ENCODE measurements at regions of chr3 and their contacts with region 1.

Region 1: DNA sequence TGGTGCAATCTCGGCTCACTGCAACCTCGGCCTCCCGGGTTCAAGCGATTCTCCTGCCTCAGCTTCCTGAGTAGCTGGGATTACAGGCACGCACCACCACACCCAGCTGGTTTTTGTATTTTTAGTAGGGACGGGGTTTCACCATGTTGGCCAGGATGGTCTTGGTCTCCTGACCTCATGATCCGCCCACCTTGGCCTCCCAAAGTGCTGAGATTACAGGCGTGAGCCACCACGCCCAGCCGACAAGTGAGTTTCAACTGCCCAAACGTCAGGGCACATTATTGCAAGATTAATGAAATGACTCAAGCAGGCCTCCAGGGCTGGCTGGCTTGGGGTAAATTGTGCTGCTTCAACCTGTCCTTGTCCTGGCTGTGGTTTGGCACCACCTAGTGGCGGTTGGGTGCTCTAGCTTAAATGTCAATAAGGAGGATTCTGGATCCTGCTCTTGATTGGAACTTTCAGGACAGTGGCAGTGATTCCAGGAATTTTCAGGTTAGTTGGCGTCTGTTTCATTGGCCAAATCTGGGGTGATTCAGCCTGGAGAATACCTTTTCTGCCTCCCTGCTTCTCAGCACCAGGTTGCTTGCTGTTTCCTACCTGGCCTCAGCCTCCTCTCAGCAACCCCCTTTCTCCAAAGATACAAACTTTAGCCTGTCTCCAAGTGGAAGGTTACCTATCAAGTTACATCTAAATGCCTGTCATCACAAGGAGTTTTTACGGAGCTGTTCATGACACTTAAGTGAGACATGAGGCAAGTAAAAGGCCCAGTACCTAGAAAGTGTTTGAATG is 32.4 kb upstream of the SACM1L start:
- DNase-seq: peak; percentile 67 to 92 (median 81)
- ATAC-seq: peak; percentile 83 to 94 (median 87)
- H3K4me3 ChIP-seq: no peak overlapping the region
- H3K4me3 Mint-ChIP-seq: no peak overlapping the region
- H3K27ac ChIP-seq: no peak overlapping the region
- H3K27ac Mint-ChIP-seq: no peak overlapping the region
- H3K4me1 ChIP-seq: peaks cover 0 to 5% of the 10 kb centered on the region in 2 experiments
- H3K4me1 Mint-ChIP-seq: peaks cover 16 to 33% (median 21%) of the 10 kb centered on the region in 3 donors
- H3K27me3 ChIP-seq: no peaks in the 10 kb centered on the region
- H3K27me3 Mint-ChIP-seq: no peaks in the 10 kb centered on the region

Region 2: DNA sequence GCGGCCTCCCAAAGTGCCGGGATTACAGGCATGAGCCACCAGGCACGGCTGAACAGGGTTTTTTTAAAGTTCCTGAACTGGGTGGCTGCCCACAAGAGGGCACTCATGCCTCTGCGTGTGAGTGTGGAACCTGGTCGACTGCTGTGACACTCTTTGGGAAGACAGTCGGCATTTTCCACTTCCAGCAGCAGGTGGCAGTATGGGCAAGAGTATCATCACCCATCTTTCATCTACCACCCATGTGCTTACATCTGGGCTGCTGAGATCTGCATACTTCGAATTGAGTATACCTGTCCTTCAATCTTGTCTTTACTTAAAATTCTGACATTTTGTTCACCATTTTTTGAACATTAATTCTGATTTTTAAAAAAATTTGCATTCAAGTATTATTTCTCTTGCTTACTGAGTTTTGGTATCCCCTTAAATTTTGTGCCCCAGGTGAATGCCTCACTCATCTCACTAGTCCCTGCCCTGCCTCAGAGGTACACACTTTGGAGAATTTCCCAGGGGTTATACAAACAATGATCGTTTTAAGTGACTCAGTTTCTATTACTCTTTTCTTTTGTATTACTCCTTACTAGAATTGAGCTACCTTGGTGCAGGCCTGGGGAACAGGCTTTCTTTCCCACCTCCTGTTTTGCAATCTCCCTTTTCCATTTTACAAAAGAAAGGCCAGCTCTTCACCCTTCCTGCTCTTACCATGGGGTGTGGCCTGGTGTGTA is 618.9 kb before region 1 on chr3:
- CTCF ChIA-PET with region 1: interaction called, 9 to 11 read pairs
- POLR2A ChIA-PET with region 1: no interaction called
- DNase-seq: peak; percentile 76 to 96 (median 88)
- ATAC-seq: peak; percentile 84 to 92 (median 90)
- H3K4me3 ChIP-seq: no peak overlapping the region
- H3K4me3 Mint-ChIP-seq: peak overlapping the region; percentile 49 to 70 (median 56)
- H3K27ac ChIP-seq: no peak overlapping the region
- H3K27ac Mint-ChIP-seq: no peak overlapping the region
- H3K4me1 ChIP-seq: peaks cover 26 to 47% of the 10 kb centered on the region in 2 experiments
- H3K4me1 Mint-ChIP-seq: peaks cover 45 to 55% (median 52%) of the 10 kb centered on the region in 3 donors
- H3K27me3 ChIP-seq: peaks cover 0 to 33% of the 10 kb centered on the region in 2 experiments
- H3K27me3 Mint-ChIP-seq: peaks cover 7 to 22% of the 10 kb centered on the region in 2 donors

Region 3: DNA sequence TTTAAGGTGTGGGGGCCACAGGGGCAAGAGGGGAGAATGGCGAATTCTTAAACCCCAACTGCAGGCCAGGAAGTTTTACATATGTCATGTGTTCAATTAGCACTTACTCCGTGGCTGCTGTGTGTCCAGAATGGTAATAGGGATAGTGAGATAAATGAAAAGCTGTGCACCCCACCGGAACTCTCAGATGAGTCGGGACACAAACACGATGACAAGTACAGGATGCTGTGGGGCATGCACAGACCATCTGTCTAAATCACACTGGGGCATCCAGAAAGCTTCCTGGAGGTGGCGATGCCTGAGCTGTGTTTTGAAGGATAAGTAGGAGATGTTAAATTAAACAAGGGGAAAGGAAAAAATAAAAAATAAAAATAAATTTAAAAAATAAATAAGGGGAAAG is 412.4 kb before region 1 on chr3:
- CTCF ChIA-PET with region 1: no interaction called
- POLR2A ChIA-PET with region 1: no interaction called
- DNase-seq: no peak
- ATAC-seq: no peak
- H3K4me3 ChIP-seq: no peak overlapping the region
- H3K4me3 Mint-ChIP-seq: no peak overlapping the region
- H3K27ac ChIP-seq: no peak overlapping the region
- H3K27ac Mint-ChIP-seq: no peak overlapping the region
- H3K4me1 ChIP-seq: no peaks in the 10 kb centered on the region
- H3K4me1 Mint-ChIP-seq: no peaks in the 10 kb centered on the region
- H3K27me3 ChIP-seq: peaks cover 0 to 21% of the 10 kb centered on the region in 2 experiments
- H3K27me3 Mint-ChIP-seq: peaks cover 9 to 21% of the 10 kb centered on the region in 2 donors

Region 4: GRCh38 chr3:45596290-45596791 is 60.4 kb before region 1 on chr3:
- CTCF ChIA-PET with region 1: interaction called, 3 to 10 read pairs
- POLR2A ChIA-PET with region 1: interaction called in 1 of 2 experiments, 3 read pairs
- DNase-seq: peak in 2 of 35 experiments; percentile 24 to 49
- ATAC-seq: no peak
- H3K4me3 ChIP-seq: peak overlapping the region; percentile 23 to 36
- H3K4me3 Mint-ChIP-seq: peak overlapping the region; percentile 72 to 89 (median 82)
- H3K27ac ChIP-seq: no peak overlapping the region
- H3K27ac Mint-ChIP-seq: peak overlapping the region; percentile 52 to 56
- H3K4me1 ChIP-seq: peaks cover 49 to 88% of the 10 kb centered on the region in 2 experiments
- H3K4me1 Mint-ChIP-seq: peaks cover 71 to 81% (median 78%) of the 10 kb centered on the region in 3 donors
- H3K27me3 ChIP-seq: no peaks in the 10 kb centered on the region
- H3K27me3 Mint-ChIP-seq: no peaks in the 10 kb centered on the region

Region 5: DNA sequence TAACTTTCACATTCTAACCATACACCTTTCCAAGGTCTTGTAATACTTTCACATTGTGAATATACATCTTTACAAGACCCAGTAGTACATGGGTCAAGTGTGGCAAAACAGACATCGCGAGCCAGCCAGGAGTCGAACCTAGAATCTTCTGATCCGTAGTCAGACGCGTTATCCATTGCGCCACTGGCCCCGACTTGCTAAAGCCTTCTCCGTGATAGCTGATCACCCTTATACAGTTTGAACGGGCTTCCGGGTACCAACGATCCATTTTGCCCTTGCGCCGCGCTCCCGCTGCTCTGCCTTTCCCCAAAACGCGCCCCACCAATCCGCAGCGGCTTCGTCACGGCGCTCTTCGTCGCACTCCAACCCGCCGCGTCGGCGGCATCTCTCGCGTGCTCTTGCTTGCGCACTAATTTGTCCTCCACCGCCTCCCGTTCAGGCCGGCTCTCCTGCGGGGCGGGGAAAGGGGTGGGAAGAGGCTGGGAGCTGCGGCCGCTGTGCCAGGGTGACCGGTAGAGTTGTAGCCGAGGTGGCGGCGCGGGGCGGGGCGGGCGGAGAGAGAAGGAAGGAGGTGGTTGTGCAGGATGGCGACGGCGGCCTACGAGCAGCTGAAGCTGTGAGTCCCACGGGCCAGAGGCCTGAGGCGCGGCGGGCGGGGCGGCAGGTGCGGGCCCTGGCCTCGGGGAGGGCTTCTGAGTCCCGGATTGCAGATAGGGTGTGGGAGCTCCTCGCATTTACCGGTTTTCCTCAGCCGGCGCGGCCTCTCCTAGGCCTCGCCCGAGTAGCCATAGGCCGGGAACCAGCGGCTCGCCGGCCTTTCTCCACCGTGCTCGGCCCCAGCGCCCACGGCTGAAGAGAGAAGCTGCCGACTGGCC is 32.4 kb after region 1 on chr3 and contains the start of gene SACM1L:
- CTCF ChIA-PET with region 1: interaction called, 7 to 22 read pairs
- POLR2A ChIA-PET with region 1: interaction called, 3 to 7 read pairs
- DNase-seq: peak; percentile 93 to 99 (median 95)
- ATAC-seq: peak; percentile 88 to 92 (median 89)
- H3K4me3 ChIP-seq: peak within 1 kb of the TSS; percentile 82 to 92
- H3K4me3 Mint-ChIP-seq: peak within 1 kb of the TSS; percentile 73 to 89 (median 89)
- H3K27ac ChIP-seq: peak within 1 kb of the TSS; percentile 96
- H3K27ac Mint-ChIP-seq: peak within 1 kb of the TSS; percentile 98 to 99
- H3K4me1 ChIP-seq: peaks cover 36 to 42% of the 10 kb centered on the region in 2 experiments
- H3K4me1 Mint-ChIP-seq: peaks cover 64 to 65% (median 64%) of the 10 kb centered on the region in 3 donors
- H3K27me3 ChIP-seq: no peaks in the 10 kb centered on the region
- H3K27me3 Mint-ChIP-seq: peaks cover 3% of the 10 kb centered on the region in 2 donors
- total RNA-seq, gene SACM1L: 62.8 to 81.5 (median 69.1) TPM

Region 6: DNA sequence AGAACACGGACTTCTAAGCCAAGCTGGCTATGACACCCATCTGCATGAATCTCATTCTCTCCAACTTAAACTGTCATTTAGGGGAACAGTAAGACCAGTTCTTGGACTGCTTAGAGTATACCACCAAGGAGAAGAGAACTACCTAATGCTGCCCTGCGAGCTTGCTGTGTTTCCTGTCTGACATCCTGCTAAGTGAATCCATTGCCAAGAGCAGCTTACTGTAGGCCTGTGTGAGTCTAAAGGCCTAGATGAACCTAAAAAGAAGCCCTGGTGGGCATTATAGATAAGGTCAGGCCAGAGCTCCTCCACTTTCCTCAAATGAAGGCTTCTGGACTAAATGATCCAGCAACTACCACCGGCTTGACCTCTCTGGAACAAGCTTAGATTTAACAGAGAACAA is 170.1 kb after region 1 on chr3:
- CTCF ChIA-PET with region 1: interaction called in 1 of 2 experiments, 12 read pairs
- POLR2A ChIA-PET with region 1: no interaction called
- DNase-seq: no peak
- ATAC-seq: no peak
- H3K4me3 ChIP-seq: no peak overlapping the region
- H3K4me3 Mint-ChIP-seq: no peak overlapping the region
- H3K27ac ChIP-seq: no peak overlapping the region
- H3K27ac Mint-ChIP-seq: no peak overlapping the region
- H3K4me1 ChIP-seq: peaks cover 0 to 2% of the 10 kb centered on the region in 2 experiments
- H3K4me1 Mint-ChIP-seq: peaks cover 3 to 12% (median 6%) of the 10 kb centered on the region in 3 donors
- H3K27me3 ChIP-seq: no peaks in the 10 kb centered on the region
- H3K27me3 Mint-ChIP-seq: no peaks in the 10 kb centered on the region